ENCODE measurements at regions of chr16 and their contacts with region 1.

Region 1: DNA sequence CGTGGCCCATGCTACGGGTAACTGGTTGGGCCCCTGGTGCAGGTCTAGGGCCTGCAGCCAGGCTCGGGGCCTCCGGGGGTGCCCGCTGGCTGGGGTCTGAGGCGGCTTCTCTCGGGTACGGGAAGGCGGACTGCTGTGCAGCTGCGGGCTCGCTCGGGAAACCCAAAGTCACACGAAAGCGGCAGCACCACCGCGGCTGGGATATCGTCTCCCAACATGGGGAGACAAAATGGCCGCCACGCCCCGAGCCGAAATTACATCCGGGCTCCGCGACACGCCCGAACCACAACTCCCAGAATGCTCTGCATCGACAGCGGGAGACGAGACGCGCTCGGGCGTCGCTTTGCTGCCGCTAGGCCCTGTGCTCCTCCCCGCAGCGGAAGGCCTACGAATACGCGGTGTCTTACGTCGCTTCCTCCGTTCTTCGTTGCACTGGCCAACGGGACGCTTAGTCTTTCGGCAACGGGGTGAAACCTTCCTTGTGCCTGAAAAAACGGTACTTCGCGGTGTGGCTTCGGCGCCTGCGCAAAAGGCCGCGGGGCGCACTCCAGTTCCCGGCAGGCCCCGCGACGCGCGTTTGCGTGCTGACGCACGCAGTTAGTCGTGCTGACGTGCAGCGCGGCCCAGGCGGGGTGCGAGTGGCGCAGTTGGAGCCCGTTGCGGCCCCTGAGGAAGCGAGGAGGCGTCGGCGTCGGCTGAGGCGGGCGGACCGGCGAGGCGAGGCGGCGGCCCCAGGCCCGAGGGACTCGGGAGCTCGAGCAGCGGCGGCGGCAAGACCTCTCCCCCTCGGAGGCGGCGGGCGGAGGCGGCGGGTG is at the start of gene SRRM2:
- DNase-seq: peak; percentile 98
- H3K4me3 ChIP-seq: peak within 1 kb of the TSS; percentile 99
- H3K27ac ChIP-seq: peak within 1 kb of the TSS; percentile 95
- H3K4me1 ChIP-seq: peaks cover 35% of the 10 kb centered on the region
- CTCF ChIP-seq: no peak
- total RNA-seq, gene SRRM2: 206 and 208 TPM in 2 replicates

Region 2: GRCh38 chr16:2531767-2532493 is 220.3 kb before region 1 on chr16:
- CTCF ChIA-PET with region 1: no interaction called
- POLR2A ChIA-PET with region 1: no interaction called
- intact Hi-C with region 1: loop called (anchors 10 kb)
- DNase-seq: peak; percentile 97
- H3K4me3 ChIP-seq: peak overlapping the region; percentile 70
- H3K27ac ChIP-seq: peak overlapping the region; percentile 69
- H3K4me1 ChIP-seq: peaks cover 18% of the 10 kb centered on the region
- CTCF ChIP-seq: no peak

Region 3: GRCh38 chr16:2673066-2673999 is 78.9 kb before region 1 on chr16:
- CTCF ChIA-PET with region 1: no interaction called
- POLR2A ChIA-PET with region 1: interaction called, 3 read pairs
- intact Hi-C with region 1: loop called (anchors 2 kb)
- DNase-seq: peak; percentile 95
- H3K4me3 ChIP-seq: peak overlapping the region; percentile 70
- H3K27ac ChIP-seq: no peak overlapping the region
- H3K4me1 ChIP-seq: peaks cover 16% of the 10 kb centered on the region
- CTCF ChIP-seq: no peak

Region 4: GRCh38 chr16:2682209-2683021 is 69.8 kb before region 1 on chr16 and contains the start of gene KCTD5:
- CTCF ChIA-PET with region 1: no interaction called
- POLR2A ChIA-PET with region 1: interaction called, 4 read pairs
- intact Hi-C with region 1: loop called (anchors 1 kb)
- DNase-seq: peak; percentile 97
- H3K4me3 ChIP-seq: peak within 1 kb of the TSS; percentile 90
- H3K27ac ChIP-seq: peak within 1 kb of the TSS; percentile 43
- H3K4me1 ChIP-seq: peaks cover 16% of the 10 kb centered on the region
- CTCF ChIP-seq: no peak
- total RNA-seq, gene KCTD5: 18.9 and 34.6 TPM in 2 replicates

Region 5: DNA sequence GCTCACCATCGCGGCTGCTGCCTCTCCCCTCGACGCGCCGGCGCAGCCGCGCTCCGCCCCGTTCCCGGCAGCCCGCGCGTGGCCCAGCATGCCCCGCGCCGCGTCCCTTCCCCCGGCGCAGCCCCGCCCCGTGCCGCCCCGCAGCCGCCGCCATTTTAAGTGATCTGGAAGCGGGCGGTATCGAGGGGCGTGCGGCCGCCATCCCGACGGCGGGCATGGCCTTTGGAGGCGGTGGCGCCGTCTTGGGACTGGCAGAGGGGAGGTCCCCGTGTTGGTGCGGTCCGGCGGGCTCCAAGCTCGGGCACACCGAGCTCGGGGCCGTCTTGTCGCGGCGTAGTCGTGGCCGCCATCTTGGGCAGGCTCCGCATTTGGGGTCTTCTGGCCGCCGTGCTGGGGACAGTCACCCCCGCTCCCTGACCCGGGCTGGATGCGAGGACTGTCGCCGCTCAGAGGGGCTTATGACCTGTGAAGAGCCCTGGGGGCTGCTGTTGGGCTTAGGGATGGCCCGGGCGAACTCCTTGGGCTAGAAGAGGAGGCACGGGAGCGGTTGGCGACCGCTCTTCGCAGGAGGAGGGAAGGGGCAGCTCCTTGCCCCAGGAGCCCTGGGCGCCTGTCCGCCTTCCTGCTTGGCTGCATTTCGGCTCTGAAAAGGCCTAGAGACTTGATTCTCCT is 25.1 kb after region 1 on chr16 and contains the start of gene ELOB:
- CTCF ChIA-PET with region 1: no interaction called
- POLR2A ChIA-PET with region 1: interaction called, 8 read pairs
- intact Hi-C with region 1: loop called (anchors 2 kb)
- DNase-seq: peak; percentile 89
- H3K4me3 ChIP-seq: peak within 1 kb of the TSS; percentile 89
- H3K27ac ChIP-seq: peak within 1 kb of the TSS; percentile 60
- H3K4me1 ChIP-seq: peaks cover 18% of the 10 kb centered on the region
- CTCF ChIP-seq: no peak
- total RNA-seq, gene ELOB: 282 and 285 TPM in 2 replicates

Region 6: DNA sequence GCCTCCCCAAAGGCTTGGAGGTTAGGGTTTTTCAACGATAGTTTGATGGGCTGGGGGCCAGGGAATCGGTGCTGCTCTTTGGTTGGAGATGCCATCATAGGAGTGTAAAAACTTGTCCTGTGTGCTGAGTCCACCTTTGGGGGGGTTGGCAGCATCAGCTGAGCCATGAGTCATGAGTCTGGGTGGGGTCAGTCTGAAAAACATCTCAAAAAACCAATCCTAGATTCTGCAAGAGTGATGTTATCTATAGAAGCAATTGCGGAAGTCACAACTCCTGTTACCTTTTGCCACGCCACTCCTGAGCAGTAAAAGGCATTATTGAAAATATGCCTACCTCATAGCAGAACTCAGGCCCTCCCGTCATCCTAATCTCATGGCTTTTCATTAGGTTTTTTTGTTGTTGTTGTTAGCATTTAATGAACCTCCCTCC is 43.5 kb after region 1 on chr16:
- CTCF ChIA-PET with region 1: no interaction called
- POLR2A ChIA-PET with region 1: no interaction called
- intact Hi-C with region 1: no loop called
- DNase-seq: no peak
- H3K4me3 ChIP-seq: no peak overlapping the region
- H3K27ac ChIP-seq: no peak overlapping the region
- H3K4me1 ChIP-seq: no peaks in the 10 kb centered on the region
- CTCF ChIP-seq: no peak